ENCODE measurements at regions of chr9 and their contacts with region 1.

Region 1: DNA sequence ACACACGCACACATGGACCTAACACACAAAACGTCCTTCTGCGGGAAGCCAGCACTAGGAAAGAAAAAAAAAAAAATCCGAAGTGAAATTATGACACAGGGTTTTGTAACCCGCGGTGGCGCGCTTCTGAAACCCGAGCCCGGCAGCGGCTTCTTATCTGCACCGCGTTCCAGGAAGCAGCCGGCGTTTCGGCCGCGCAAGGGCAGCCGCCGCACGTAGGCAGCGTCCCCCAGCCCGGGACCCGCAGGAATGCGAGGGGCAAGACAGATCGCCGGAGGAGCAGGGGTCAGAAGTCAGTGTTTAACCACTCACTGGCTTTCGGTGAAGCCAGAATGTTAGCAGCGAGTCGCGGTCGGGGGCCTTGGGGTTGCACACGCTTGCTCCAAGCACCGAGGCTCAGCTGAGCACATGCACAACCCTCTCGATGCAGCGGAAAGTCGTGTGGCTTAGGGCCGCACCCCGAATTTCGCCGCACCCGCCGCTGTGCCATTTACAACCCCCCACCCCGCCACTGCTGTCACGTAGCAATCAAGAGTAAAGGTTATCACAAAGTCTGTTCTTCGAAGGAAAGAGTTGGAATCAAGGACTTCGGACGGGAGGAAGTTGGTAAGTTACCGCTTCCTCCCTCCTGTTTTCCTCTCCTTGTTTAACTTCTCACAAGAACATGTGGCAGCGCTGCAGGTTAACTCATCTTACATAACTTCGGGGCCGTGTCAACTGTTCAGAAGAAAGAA is 167.9 kb downstream of the AUH start:
- DNase-seq: peak; percentile 92
- ATAC-seq: peak; percentile 62
- H3K4me3 Mint-ChIP-seq: peak overlapping the region; percentile 65
- H3K27ac Mint-ChIP-seq: peak overlapping the region; percentile 94
- H3K4me1 Mint-ChIP-seq: peaks cover 74% of the 10 kb centered on the region
- H3K27me3 Mint-ChIP-seq: no peaks in the 10 kb centered on the region

Region 2: DNA sequence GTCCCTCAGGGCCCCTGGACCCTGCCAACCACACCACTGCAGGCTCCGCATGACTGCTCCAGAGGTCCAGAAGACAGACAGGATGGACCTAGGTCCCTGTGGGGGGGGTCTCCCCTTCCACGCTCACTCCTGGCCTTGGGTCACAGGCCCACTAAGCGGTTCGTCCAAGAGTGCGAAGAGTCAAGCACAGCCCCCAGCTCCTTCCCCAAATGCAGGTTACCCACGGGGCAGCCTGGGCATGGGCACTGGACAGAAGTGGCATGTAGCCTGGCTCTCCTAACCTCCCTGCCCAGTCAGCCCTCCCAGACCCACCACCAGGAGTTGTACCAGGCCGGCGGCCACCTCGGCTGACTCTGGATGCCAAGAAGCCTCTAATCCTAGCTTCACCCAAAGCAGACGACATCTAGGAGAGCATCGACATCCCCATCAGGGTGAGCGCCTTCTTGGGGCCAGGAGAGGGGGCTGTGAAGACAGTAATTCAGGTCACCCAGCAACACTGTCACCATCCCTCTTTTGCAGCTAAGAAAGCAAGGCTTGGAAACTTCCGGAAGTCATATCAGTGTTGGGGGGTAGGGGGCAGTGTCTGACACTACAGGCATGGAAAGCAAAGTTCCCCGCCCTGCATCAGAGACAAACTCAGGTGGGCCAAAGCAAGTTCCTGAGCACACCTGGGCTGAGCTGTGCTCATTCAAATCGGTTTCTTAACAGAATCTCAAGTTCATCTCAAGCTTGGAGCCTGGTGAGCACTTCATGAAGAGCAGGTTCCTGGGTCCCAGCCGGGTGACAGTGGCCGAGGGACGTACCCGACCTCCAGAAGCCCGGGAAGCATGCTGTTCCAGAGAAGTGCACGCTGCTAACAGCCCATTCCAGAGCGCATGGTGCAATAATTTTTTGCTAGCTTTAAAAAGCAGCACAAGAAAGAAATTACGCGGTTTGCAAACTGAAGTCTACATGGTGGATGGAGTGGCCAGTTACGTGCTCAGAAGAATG is 1764.6 kb before region 1 on chr9:
- CTCF ChIA-PET with region 1: no interaction called
- POLR2A ChIA-PET with region 1: no interaction called
- intact Hi-C with region 1: loop called in 1 of 2 experiments (anchors 10 kb)
- DNase-seq: peak; percentile 75
- ATAC-seq: peak; percentile 47
- H3K4me3 Mint-ChIP-seq: no peak overlapping the region
- H3K27ac Mint-ChIP-seq: peak overlapping the region; percentile 88
- H3K4me1 Mint-ChIP-seq: peaks cover 97% of the 10 kb centered on the region
- H3K27me3 Mint-ChIP-seq: no peaks in the 10 kb centered on the region

Region 3: DNA sequence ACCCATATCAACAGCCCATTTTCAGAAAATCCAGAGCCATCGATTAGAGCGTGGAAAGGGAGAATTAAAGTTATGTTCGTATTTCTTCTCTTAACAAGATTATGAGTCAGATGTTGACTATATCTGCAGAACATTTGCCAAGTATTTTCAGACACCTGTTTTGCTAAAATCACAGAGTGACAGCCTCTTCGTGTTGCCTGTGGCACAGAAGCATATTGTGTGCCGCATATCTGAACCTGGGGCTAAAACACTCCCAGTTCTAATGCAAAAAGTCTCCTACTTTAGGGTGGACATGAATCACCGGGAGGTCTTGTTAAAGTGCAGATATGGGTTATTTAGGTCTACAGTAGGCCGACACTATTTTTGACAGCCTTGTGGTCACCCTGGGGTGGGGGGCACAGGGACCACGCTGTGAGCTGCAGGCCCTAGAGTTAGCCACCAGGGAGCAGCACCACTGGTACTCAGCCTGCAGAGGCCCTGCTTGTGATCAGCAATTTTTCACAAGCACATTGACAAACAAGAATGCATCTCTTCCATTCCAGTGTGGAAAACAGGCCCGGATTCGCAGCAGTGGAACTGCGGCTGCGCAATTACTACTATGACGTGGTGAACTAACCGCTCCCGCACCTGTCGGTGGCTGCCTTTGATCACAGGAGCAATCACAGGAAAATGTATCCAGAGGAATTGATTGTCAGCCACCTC is 298.7 kb before region 1 on chr9:
- CTCF ChIA-PET with region 1: no interaction called
- POLR2A ChIA-PET with region 1: no interaction called
- intact Hi-C with region 1: no loop called
- DNase-seq: peak; percentile 35
- ATAC-seq: no peak
- H3K4me3 Mint-ChIP-seq: no peak overlapping the region
- H3K27ac Mint-ChIP-seq: no peak overlapping the region
- H3K4me1 Mint-ChIP-seq: no peaks in the 10 kb centered on the region
- H3K27me3 Mint-ChIP-seq: peaks cover under 1% of the 10 kb centered on the region

Region 4: DNA sequence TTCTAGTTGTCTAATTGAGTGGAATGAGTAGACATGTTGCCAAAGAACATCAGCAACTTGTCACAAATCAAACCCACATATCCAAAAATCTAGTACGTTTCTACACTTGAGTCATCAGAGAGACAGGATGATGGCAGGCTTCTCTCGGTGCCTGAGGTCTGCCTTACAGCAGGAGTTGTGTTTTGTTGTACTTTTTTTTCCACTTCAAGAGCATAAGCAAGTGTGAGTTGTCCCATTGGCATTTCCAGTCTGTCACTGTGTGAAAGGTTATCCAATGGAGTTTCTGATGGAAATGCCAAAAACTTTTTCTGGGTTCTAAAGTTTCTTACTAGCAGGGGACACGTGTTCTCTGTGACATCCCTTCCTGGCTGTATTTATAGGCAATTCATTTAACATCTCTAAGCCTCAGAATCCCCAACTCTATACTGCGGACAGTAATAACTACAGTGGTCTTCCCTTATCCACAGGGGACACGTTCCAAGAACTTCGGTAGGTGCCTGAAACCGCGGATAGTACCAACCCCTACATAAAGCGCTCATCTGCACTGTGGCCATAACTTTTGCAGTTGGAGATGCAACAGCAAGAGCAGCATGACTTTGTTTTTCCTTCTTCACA is 145.7 kb before region 1 on chr9:
- CTCF ChIA-PET with region 1: no interaction called
- POLR2A ChIA-PET with region 1: interaction called, 4 read pairs
- intact Hi-C with region 1: loop called (anchors 1 kb)
- DNase-seq: peak; percentile 75
- ATAC-seq: peak; percentile 83
- H3K4me3 Mint-ChIP-seq: peak overlapping the region; percentile 46
- H3K27ac Mint-ChIP-seq: peak overlapping the region; percentile 96
- H3K4me1 Mint-ChIP-seq: peaks cover 82% of the 10 kb centered on the region
- H3K27me3 Mint-ChIP-seq: peaks cover 23% of the 10 kb centered on the region

Region 5: DNA sequence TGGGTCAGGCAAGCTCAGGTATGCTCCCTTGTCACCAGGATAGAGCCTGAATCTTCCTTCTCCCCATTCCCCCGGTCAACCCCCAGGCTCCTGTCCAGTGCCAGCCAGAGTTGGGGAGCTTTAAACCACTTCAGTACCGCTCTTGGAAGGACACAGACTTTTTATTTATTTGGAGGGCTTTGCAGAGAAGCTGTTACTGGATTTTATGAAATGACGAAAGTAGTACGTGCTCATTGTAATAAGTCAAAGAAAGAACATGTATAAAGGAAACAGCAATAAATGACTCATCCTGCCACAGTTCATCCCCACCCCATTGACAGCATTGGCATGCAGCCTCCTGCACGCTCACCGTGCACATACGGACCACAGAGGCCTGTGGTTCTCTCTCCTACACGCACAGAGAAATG is 62.4 kb before region 1 on chr9:
- CTCF ChIA-PET with region 1: interaction called, 9 read pairs
- POLR2A ChIA-PET with region 1: interaction called, 8 read pairs
- intact Hi-C with region 1: loop called (anchors 1 kb)
- DNase-seq: peak; percentile 91
- ATAC-seq: peak; percentile 98
- H3K4me3 Mint-ChIP-seq: peak overlapping the region; percentile 3
- H3K27ac Mint-ChIP-seq: peak overlapping the region; percentile 94
- H3K4me1 Mint-ChIP-seq: peaks cover 29% of the 10 kb centered on the region
- H3K27me3 Mint-ChIP-seq: no peaks in the 10 kb centered on the region

Region 6: GRCh38 chr9:91207729-91208418 is 14.0 kb after region 1 on chr9:
- CTCF ChIA-PET with region 1: interaction called, 8 read pairs
- POLR2A ChIA-PET with region 1: interaction called, 69 read pairs
- intact Hi-C with region 1: loop called (anchors 1 kb)
- DNase-seq: peak; percentile 51
- ATAC-seq: peak; percentile 80
- H3K4me3 Mint-ChIP-seq: peak overlapping the region; percentile 36
- H3K27ac Mint-ChIP-seq: peak overlapping the region; percentile 98
- H3K4me1 Mint-ChIP-seq: peaks cover 75% of the 10 kb centered on the region
- H3K27me3 Mint-ChIP-seq: no peaks in the 10 kb centered on the region

Region 7: GRCh38 chr9:91395553-91396471 is 202.0 kb after region 1 on chr9:
- CTCF ChIA-PET with region 1: no interaction called
- POLR2A ChIA-PET with region 1: no interaction called
- intact Hi-C with region 1: loop called in 1 of 2 experiments (anchors 1 kb)
- DNase-seq: peak; percentile 42
- ATAC-seq: peak; percentile 87
- H3K4me3 Mint-ChIP-seq: peak overlapping the region; percentile 4
- H3K27ac Mint-ChIP-seq: peak overlapping the region; percentile 80
- H3K4me1 Mint-ChIP-seq: peaks cover 18% of the 10 kb centered on the region
- H3K27me3 Mint-ChIP-seq: peaks cover 10% of the 10 kb centered on the region

Region 8: GRCh38 chr9:91659529-91660495 is 466.0 kb after region 1 on chr9:
- CTCF ChIA-PET with region 1: no interaction called
- POLR2A ChIA-PET with region 1: no interaction called
- intact Hi-C with region 1: no loop called
- DNase-seq: peak; percentile 13
- ATAC-seq: no peak
- H3K4me3 Mint-ChIP-seq: no peak overlapping the region
- H3K27ac Mint-ChIP-seq: no peak overlapping the region
- H3K4me1 Mint-ChIP-seq: no peaks in the 10 kb centered on the region
- H3K27me3 Mint-ChIP-seq: peaks cover 15% of the 10 kb centered on the region